ENCODE measurements at regions of chr2 and their contacts with region 1.

Region 1: GRCh38 chr2:85066874-85067351 is 66.3 kb upstream of the TCF7L1 start:
- DNase-seq: peak; percentile 64
- H3K4me3 ChIP-seq: peak overlapping the region; percentile 5
- H3K27ac ChIP-seq: no peak overlapping the region
- H3K4me1 ChIP-seq: no peaks in the 10 kb centered on the region
- H3K27me3 ChIP-seq: no peaks in the 10 kb centered on the region
- CTCF ChIP-seq: peak; percentile 71

Region 2: GRCh38 chr2:84800194-84800805 is 266.6 kb before region 1 on chr2:
- intact Hi-C with region 1: no loop called
- DNase-seq: no peak
- H3K4me3 ChIP-seq: no peak overlapping the region
- H3K27ac ChIP-seq: no peak overlapping the region
- H3K4me1 ChIP-seq: no peaks in the 10 kb centered on the region
- H3K27me3 ChIP-seq: no peaks in the 10 kb centered on the region
- CTCF ChIP-seq: no peak

Region 3: DNA sequence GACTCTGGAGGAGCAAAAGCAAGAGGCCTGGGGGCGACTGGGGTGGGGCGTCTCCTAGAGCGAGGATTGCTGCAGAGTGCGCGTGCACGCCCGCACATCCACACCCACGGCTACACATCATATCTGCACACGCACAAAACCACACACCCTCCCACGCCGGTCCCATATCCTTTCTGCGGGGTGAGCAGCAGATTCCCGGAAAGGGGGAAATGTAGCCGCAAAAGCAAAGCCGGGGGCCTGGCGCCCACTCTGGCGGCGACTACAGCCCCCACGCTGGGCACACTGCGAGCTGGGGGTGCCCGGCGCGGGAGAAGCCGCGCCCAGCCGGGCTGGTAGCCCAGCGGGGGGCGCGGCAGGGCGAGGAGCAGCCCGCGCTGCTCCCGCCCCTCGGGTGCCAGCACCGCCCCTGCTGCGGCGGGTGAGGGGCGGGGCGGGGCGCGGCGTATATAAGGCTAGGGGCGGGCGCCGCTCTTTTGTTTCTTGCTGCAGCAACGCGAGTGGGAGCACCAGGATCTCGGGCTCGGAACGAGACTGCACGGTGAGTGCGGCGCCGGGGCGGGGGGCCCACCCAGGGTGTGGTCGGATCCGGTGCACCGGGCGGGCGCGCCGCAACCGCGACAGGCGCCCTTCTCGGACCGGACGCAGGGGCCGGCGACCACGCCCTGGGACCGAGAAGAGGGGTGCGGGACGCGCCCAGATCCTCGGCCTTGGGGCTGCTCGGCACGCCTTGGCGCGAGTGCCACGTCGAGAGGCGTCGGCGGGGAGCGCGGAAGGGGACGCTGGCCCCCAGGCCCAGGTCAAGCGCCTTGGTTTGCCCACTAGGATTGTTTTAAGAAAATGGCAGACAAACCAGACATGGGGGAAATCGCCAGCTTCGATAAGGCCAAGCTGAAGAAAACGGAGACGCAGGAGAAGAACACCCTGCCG is 161.5 kb before region 1 on chr2 and contains the start of gene TMSB10:
- intact Hi-C with region 1: no loop called
- DNase-seq: peak; percentile 93
- H3K4me3 ChIP-seq: peak within 1 kb of the TSS; percentile 72
- H3K27ac ChIP-seq: peak within 1 kb of the TSS; percentile 99
- H3K4me1 ChIP-seq: no peaks in the 10 kb centered on the region
- H3K27me3 ChIP-seq: no peaks in the 10 kb centered on the region
- CTCF ChIP-seq: no peak
- total RNA-seq, gene TMSB10: 2,226 to 3,150 TPM

Region 4: GRCh38 chr2:84991404-84992151 is 75.3 kb before region 1 on chr2:
- intact Hi-C with region 1: loop called (anchors 10 kb)
- DNase-seq: no peak
- H3K4me3 ChIP-seq: no peak overlapping the region
- H3K27ac ChIP-seq: no peak overlapping the region
- H3K4me1 ChIP-seq: peaks cover 4% of the 10 kb centered on the region
- H3K27me3 ChIP-seq: no peaks in the 10 kb centered on the region
- CTCF ChIP-seq: no peak

Region 5: DNA sequence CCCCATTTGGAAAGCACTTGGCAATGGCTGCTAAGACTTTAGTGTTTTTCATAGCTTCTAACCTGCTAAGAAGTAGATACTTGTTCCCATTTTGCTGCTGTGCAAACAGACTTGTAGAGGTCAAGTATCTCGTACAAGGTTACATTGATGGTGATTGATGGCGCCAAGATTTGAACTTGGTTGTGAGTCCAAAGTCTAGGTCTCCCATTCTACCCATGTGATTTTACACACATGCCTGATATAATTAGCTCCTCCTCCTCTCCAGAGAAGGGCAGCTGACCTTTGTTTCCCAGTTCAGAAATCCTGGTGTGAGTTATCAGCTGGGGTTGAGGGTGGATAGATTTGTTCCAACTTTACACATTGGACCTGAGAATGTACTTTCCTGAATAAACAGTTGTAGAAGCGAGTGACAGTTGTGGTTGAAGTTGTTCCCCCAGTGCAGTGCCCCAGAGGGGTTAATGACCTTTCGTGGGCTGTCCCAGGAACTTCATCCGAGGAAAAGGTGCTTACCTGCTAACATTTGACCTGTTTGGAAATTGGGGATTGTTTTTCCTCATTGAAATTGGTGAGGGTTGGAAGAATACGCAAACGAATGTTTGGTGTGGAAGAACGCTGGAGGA is 76.7 kb after region 1 on chr2:
- intact Hi-C with region 1: no loop called
- DNase-seq: no peak
- H3K4me3 ChIP-seq: no peak overlapping the region
- H3K27ac ChIP-seq: no peak overlapping the region
- H3K4me1 ChIP-seq: no peaks in the 10 kb centered on the region
- H3K27me3 ChIP-seq: no peaks in the 10 kb centered on the region
- CTCF ChIP-seq: no peak

Region 6: GRCh38 chr2:85302121-85302520 is 235.2 kb after region 1 on chr2:
- intact Hi-C with region 1: loop called (anchors 2 kb)
- DNase-seq: no peak
- H3K4me3 ChIP-seq: no peak overlapping the region
- H3K27ac ChIP-seq: no peak overlapping the region
- H3K4me1 ChIP-seq: no peaks in the 10 kb centered on the region
- H3K27me3 ChIP-seq: no peaks in the 10 kb centered on the region
- CTCF ChIP-seq: no peak

Region 7: DNA sequence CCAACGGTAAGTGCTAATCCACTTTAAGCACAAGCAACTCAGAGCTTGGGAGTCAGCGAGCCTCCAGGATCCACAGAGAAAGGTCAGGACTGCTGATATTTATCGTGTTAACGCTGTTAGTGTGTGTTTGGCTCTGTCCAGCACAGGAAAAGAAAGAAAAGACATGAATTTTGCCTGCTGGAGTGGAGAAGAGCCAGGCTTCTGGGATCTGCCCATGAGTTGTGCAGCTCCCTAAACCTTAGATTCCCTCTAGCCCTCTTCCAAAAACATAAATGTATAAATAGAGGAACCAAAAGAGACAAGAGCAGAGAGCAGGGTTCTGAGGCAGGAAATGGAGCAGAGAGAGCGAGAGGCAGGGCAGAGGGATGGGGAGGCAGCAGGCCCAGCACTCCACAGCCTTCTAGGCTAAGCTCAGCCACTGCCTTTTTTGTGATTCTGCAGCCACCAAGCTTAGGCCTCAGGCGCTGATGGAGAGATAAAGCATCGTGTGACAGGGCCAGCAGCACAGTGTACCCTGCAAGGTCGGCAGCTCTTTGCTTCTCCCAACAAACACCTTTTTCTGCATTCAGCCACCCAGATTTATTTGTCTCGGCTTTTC is 457.5 kb after region 1 on chr2:
- intact Hi-C with region 1: no loop called
- DNase-seq: no peak
- H3K4me3 ChIP-seq: no peak overlapping the region
- H3K27ac ChIP-seq: no peak overlapping the region
- H3K4me1 ChIP-seq: no peaks in the 10 kb centered on the region
- H3K27me3 ChIP-seq: no peaks in the 10 kb centered on the region
- CTCF ChIP-seq: no peak